IMR-90 (cell line): ENCODE measurements at regions of chr6 and their contacts with region 1.

Region 1: GRCh38 chr6:155882527-155883333 is 427.1 kb upstream of the NOX3 start:
- DNase-seq: peak; percentile 21
- ATAC-seq: peak; percentile 5; the same call in 1 of the 2 replicates
- H3K4me3 ChIP-seq: no peak overlapping the region
- H3K27ac ChIP-seq: peak overlapping the region; percentile 83
- H3K4me1 ChIP-seq: peaks cover 22% of the 10 kb centered on the region
- H3K27me3 ChIP-seq: no peaks in the 10 kb centered on the region
- CTCF ChIP-seq: no peak
- POLR2A ChIP-seq: no peak
- RAD21 ChIP-seq: no peak

Region 2: GRCh38 chr6:155382338-155382685 is 500.4 kb before region 1 on chr6:
- CTCF ChIA-PET with region 1: no interaction called
- POLR2A ChIA-PET with region 1: no interaction called
- dilution Hi-C with region 1: no loop called
- in situ Hi-C with region 1: no loop called
- intact Hi-C with region 1: loop called (anchors 1 kb)
- DNase-seq: peak; percentile 96
- ATAC-seq: peak; percentile 89
- H3K4me3 ChIP-seq: no peak overlapping the region
- H3K27ac ChIP-seq: no peak overlapping the region
- H3K4me1 ChIP-seq: peaks cover 6% of the 10 kb centered on the region
- H3K27me3 ChIP-seq: no peaks in the 10 kb centered on the region
- CTCF ChIP-seq: no peak
- POLR2A ChIP-seq: no peak
- RAD21 ChIP-seq: no peak

Region 3: DNA sequence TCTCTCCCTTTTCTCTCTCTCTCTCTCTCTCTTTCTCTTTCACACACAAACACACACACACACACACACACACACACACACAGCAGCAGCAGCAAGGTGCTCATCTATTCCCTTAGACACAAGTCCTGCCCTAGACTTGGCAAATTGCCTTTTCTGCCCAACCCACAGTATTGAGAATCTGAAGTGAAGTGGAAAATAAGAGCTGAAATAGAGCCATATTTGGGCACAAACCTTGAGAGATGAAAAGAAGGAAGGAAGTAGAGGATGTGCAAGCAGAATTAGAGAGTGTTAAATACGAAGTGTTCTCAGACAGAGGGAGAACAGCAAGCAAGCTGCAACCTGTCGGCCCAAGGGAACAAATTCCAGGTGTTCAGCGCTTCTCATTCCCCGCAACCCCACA is 130.4 kb after region 1 on chr6:
- CTCF ChIA-PET with region 1: no interaction called
- POLR2A ChIA-PET with region 1: no interaction called
- dilution Hi-C with region 1: no loop called
- in situ Hi-C with region 1: no loop called
- intact Hi-C with region 1: loop called (anchors 10 kb)
- DNase-seq: no peak
- ATAC-seq: no peak
- H3K4me3 ChIP-seq: no peak overlapping the region
- H3K27ac ChIP-seq: no peak overlapping the region
- H3K4me1 ChIP-seq: peaks cover 14% of the 10 kb centered on the region
- H3K27me3 ChIP-seq: no peaks in the 10 kb centered on the region
- CTCF ChIP-seq: no peak
- POLR2A ChIP-seq: no peak
- RAD21 ChIP-seq: no peak